Activated T-helper 1 cell treated with anti-CD3 and anti-CD28 coated beads, Interleukin-12 subunit alpha, Interleukin-12 subunit beta, Interleukin-2, Interleukin-4 antibody, amounts not matched to agents 30 ng/mL and 10 ng/mL and 1 ng/mL, durations not matched to agents 14 hours and 24 hours and 36 hours (primary cell): ENCODE measurements at regions of chr22 and their contacts with region 1.

Region 1: GRCh38 chr22:30212363-30212995 is 34.1 kb downstream of the LIF start:
- DNase-seq: no peak
- H3K4me3 Mint-ChIP-seq: peak overlapping the region; percentile 4
- H3K27ac Mint-ChIP-seq: peak overlapping the region; percentile 81
- H3K4me1 Mint-ChIP-seq: peaks cover 54% of the 10 kb centered on the region
- H3K27me3 Mint-ChIP-seq: no peaks in the 10 kb centered on the region

Region 2: GRCh38 chr22:29766632-29767170 is 445.8 kb before region 1 on chr22 and contains the start of gene ZMAT5:
- intact Hi-C with region 1: no loop called
- DNase-seq: peak; percentile 90
- H3K4me3 Mint-ChIP-seq: peak within 1 kb of the TSS; percentile 98
- H3K27ac Mint-ChIP-seq: peak within 1 kb of the TSS; percentile 88
- H3K4me1 Mint-ChIP-seq: peaks cover 40% of the 10 kb centered on the region
- H3K27me3 Mint-ChIP-seq: no peaks in the 10 kb centered on the region
- total RNA-seq, gene ZMAT5: 28.4 and 28.5 TPM in 2 replicates

Region 3: GRCh38 chr22:30178181-30179126 is 34.0 kb before region 1 on chr22:
- intact Hi-C with region 1: loop called (anchors 2 kb)
- DNase-seq: peak; percentile 49
- H3K4me3 Mint-ChIP-seq: peak overlapping the region; percentile 56
- H3K27ac Mint-ChIP-seq: peak overlapping the region; percentile 97
- H3K4me1 Mint-ChIP-seq: peaks cover 87% of the 10 kb centered on the region
- H3K27me3 Mint-ChIP-seq: no peaks in the 10 kb centered on the region

Region 4: GRCh38 chr22:30190574-30190973 is 21.9 kb before region 1 on chr22:
- intact Hi-C with region 1: loop called (anchors 1 kb)
- DNase-seq: no peak
- H3K4me3 Mint-ChIP-seq: peak overlapping the region; percentile 27
- H3K27ac Mint-ChIP-seq: peak overlapping the region; percentile 88
- H3K4me1 Mint-ChIP-seq: peaks cover 93% of the 10 kb centered on the region
- H3K27me3 Mint-ChIP-seq: no peaks in the 10 kb centered on the region

Region 5: DNA sequence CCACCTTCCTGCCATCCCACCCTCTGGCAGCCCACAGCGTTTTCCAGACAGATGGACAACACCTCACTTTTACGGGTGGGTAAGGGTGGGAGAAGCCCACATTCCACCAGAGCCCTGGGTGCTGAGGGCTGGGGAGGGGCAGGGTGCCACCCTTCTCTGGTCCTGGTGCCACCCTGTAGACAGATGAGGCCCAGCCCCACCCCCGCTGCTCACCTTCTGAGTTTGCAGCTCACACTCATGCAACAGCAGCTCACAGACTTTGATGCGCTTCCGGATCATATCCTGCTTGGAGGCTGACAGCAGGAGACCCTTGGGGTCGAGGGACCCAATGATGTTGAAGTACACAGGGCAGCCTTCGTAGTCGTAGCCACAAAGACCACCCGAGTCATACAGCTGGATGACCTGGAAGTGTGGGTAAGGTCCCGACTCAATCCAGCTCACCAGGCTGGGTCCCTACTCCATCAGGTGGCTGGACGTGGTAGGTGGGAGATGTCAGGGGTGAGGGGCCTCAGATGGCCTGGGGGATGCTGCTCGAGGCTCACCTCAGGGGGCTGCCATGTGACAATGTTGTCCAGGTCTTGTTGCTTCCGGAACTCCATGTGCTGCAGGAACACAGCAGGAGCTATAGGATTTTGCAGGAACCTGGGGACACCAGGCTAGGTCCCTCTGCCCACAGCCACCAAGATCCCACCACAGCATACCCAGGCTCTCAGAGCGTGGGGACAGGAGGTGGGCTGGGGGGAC is 282.7 kb after region 1 on chr22:
- intact Hi-C with region 1: no loop called
- DNase-seq: no peak
- H3K4me3 Mint-ChIP-seq: no peak overlapping the region
- H3K27ac Mint-ChIP-seq: no peak overlapping the region
- H3K4me1 Mint-ChIP-seq: no peaks in the 10 kb centered on the region
- H3K27me3 Mint-ChIP-seq: peaks cover 13% of the 10 kb centered on the region